AG04449 (cell line): ENCODE measurements at regions of chr5 and their contacts with region 1.

Region 1: DNA sequence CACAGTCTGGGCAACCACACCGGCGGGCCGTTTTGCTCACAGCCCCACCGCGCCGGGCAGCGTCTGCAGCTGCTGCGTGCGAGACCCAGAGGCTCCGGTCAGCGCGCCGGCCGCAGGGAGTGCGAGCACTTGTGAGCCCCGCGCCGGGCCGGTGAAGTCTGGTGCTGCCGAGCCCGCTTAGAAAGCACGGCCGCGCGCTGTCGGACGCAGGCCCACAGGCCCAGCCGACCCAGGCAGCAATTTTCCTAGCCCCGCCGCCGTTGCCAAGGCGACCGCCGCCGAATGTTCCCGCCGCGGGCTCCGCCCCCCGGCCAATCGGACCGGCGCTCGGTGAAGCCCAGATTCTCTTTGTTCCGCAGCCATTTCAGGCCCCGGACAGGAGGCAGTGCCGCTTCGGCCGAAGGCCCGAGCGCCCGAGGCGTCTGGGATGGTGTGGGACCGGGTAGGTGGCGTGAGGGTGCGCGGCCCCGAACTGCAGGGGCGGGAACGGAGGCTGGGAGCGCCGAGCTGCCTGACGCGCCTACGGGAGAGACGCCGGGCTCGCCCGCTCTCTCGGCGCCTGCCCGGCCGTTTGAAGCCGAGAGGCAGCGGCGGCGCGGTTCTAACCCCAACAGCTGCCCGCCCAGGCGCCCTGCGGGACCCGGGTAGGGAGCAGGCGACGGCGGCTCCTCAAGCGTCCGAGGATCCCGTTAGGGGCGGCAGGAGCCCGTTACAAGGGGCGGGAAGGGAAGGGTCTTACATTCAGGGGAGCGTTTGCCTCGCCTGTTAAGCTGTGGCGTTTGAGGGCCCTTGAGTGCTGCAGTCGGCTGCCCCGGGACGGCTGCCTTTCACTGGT is at the start of gene TNPO1:
- DNase-seq: peak; percentile 46
- H3K4me3 ChIP-seq: peak within 1 kb of the TSS; percentile 77
- CTCF ChIP-seq: no peak

Region 2: DNA sequence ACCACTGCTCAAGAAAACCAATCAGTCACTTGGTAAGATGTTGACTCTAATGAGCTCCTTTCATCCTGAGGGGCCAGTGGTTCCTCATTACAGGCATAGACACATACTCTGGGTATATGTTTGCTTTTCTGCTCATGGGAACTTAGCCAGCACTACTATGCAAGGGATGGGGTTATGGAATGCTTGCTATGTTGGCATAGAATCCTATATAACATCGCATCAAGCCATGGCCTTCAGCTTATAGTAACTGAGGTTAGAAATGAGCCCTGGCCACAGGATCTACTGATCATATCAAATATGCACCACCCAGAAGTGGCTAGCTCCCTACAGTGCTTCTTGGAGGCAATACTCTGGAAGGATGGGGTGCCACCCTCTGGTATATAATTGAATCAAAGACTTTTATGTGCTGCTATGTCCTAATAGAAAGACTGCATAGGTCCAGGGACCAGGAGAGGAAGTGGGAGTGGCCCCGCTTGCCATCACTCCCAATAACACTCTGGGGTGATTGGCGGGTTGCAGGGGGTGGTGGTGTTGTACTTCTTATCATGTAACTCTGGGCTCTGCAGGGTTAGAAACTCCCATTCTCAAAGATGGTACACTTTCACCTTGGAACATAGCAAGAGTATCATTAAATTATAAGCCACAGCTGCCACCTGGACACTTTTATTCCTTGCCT is 379.6 kb before region 1 on chr5:
- CTCF ChIA-PET with region 1: no interaction called
- POLR2A ChIA-PET with region 1: no interaction called
- DNase-seq: peak; percentile 74
- H3K4me3 ChIP-seq: no peak overlapping the region
- CTCF ChIP-seq: no peak

Region 3: DNA sequence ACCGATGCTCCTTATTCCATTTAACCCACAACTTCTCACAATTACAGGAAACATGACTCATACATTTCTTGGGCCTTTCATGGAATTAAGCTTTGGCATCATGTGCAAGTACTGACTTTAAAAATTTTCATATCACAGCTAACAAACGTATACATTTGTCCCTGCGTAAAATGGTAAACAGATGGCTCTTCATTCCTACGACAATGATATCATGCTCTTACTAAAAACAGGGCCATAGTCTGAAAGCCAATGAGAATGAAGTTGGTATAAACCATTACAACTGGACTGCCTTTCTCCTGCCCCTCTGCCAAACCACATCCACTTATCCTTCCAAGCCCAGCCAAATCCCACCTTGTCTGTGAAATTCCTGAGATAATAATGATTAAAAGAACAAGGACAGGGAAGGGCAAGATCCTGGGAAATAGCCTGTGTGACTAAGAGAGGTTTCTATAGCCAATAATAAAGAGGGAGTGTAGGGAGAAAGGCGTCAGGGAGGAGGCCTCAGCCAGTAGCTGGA is 264.4 kb before region 1 on chr5:
- CTCF ChIA-PET with region 1: interaction called, 12 read pairs
- POLR2A ChIA-PET with region 1: no interaction called
- DNase-seq: peak; percentile 41
- H3K4me3 ChIP-seq: no peak overlapping the region
- CTCF ChIP-seq: no peak

Region 4: DNA sequence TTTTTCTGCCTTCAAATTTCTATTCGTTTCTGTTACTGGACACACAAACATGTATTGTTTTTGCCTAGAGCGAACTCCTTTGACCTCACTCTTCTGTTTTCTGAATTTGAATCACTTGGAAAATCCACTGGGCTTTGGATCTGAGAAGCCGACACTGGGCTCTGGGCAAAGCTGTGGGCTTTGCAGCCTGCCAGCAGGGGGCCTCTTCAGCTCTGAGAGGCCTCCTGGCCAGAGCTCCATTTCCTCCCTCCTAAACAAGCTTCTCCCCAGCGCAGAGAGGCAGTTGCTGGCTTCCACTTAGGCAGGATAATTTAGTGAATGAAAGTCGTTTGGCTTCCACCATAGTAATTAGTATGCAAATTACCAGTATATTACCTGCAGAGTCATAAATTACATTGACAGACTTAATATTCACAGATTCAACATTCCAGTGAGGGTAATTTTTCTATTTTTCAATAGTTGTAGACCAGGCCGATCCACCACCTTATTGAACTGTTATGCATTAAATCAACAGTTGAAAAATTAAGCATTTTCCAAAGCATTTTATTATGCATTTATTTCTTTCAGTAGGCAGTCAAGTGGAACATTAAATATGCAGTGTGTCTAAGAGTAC is 205.3 kb before region 1 on chr5:
- CTCF ChIA-PET with region 1: interaction called, 109 read pairs
- POLR2A ChIA-PET with region 1: interaction called, 3 read pairs
- DNase-seq: no peak
- H3K4me3 ChIP-seq: no peak overlapping the region
- CTCF ChIP-seq: peak; percentile 94

Region 5: DNA sequence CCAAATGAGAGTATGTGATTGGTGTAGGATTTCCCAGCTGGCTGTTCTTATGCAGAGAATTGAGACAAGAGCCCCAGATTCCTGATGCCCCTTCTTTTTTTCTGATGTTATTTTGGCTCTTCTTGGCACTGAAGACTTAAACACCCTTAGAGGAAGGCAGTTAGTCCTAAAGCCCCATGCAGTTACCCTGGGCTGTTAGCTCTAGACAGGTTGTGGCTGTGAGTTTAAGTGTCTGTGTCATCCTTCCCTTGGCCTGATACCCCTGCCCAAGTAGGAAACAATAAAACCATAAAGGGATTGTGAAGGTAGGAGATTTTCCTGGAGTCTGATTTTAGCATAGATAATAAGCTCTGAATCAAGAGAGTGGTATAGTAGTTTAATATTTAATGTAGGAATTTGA is 13.2 kb after region 1 on chr5:
- CTCF ChIA-PET with region 1: interaction called, 43 read pairs
- POLR2A ChIA-PET with region 1: interaction called, 3 read pairs
- DNase-seq: no peak
- H3K4me3 ChIP-seq: no peak overlapping the region
- CTCF ChIP-seq: no peak

Region 6: DNA sequence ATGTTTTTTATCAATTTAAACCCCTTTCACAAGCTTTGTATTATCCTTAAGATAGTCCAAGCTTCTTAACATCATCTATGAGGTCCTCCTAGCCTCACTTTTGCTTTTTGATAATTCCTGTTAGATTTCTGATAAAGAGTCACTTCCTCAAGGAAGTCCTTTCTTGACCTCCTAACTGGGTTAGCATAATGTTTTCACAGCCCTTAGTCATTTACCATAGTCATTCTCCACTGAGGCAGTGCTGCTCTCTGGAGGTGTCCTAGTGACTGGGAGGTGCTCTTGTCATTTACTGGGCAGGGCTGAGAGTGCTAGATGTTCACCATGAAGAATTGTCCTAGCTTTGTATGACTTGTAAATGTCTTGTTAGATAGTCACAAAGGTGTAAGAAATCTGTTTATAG is 26.3 kb after region 1 on chr5:
- CTCF ChIA-PET with region 1: interaction called, 19 read pairs
- POLR2A ChIA-PET with region 1: interaction called, 3 read pairs
- DNase-seq: no peak
- H3K4me3 ChIP-seq: no peak overlapping the region
- CTCF ChIP-seq: no peak